ENCODE measurements at regions of chr9 and their contacts with region 1.

Region 1: DNA sequence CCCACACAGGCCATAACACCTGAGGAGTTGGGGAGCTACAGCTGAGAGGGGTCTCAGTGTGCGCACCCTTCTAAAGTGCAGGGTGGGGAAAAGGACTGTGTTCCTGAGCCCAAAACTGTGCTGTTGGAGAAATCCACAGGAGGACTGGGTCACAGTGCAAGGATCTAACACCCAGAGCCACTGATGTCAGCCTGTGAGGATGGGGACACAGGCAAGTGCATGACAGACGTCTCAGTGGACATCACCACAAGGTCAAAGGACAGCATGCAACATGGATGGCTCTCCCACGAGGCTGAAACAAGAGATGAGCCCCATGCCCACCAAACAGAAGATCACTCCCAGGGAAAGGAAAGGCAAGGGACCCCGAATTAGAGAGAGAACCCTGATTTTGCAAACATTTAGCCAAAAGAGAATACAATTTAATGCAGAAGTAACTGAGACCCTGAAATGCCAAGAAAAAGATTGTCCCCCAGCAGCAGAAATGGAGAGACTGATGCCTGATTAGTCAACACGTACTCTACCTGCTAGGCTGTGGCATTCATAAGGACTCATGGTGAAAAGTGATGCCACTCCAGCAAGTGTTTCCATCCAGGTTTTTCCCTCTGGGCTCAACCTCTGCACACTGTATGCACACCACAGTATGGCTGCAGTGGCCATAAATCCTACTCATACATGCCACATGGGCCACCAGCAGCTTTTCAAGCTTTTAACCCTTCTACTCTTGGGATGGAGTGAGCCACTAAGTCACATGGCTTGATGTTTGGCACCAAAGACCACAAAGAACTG is 14.2 kb downstream of the KLF9 start:
- DNase-seq: no peak
- ATAC-seq: no peak
- H3K4me3 Mint-ChIP-seq: no peak overlapping the region
- H3K27ac Mint-ChIP-seq: peak overlapping the region; percentile 52
- H3K4me1 Mint-ChIP-seq: peaks cover 45% of the 10 kb centered on the region
- H3K27me3 Mint-ChIP-seq: no peaks in the 10 kb centered on the region

Region 2: GRCh38 chr9:70411930-70412831 is 11.9 kb after region 1 on chr9:
- POLR2A ChIA-PET with region 1: interaction called, 13 read pairs
- DNase-seq: peak; percentile 73
- ATAC-seq: peak; percentile 10
- H3K4me3 Mint-ChIP-seq: peak overlapping the region; percentile 93
- H3K27ac Mint-ChIP-seq: peak overlapping the region; percentile 98
- H3K4me1 Mint-ChIP-seq: peaks cover 50% of the 10 kb centered on the region
- H3K27me3 Mint-ChIP-seq: no peaks in the 10 kb centered on the region